ENCODE measurements at regions of chr19 and their contacts with region 1.

Region 1: GRCh38 chr19:40609561-40610395 is 8.6 kb downstream of the LTBP4 start:
- DNase-seq: peak; percentile 61
- H3K4me3 ChIP-seq: peak overlapping the region in 2 of 3 experiments; percentile 8 to 33
- H3K27ac ChIP-seq: no peak overlapping the region
- H3K4me1 ChIP-seq: peaks cover 32% of the 10 kb centered on the region
- H3K27me3 ChIP-seq: no peaks in the 10 kb centered on the region
- CTCF ChIP-seq: no peak
- POLR2A ChIP-seq: peak; percentile 30

Region 2: DNA sequence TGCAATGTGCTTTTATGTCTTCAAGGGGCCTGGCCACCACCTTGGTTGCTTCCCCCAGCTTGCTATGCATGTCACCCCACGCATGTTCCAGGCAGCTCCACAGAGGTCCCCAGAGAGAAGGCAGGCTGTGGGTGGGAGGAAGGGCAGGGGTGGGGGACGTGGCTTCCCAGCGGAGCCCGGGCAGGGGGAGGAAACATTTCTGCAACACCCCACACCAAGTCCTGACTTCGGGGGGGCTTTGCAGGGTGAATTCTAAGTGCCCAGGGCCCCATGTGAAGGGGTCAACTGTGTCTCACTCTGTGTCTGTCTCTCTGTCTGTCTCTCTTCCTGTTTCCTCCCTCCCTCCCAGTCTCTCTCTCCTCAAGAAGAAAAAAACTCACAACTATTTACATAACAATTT is 31.0 kb after region 1 on chr19:
- CTCF ChIA-PET with region 1: interaction called, 126 read pairs
- POLR2A ChIA-PET with region 1: no interaction called
- dilution Hi-C with region 1: no loop called
- intact Hi-C with region 1: no loop called
- DNase-seq: peak; percentile 19
- H3K4me3 ChIP-seq: no peak overlapping the region
- H3K27ac ChIP-seq: peak overlapping the region; percentile 10
- H3K4me1 ChIP-seq: peaks cover 14% of the 10 kb centered on the region
- H3K27me3 ChIP-seq: no peaks in the 10 kb centered on the region
- CTCF ChIP-seq: no peak
- POLR2A ChIP-seq: no peak

Measured in endothelial cell of umbilical vein (primary cell).